ENCODE measurements at regions of chr19 and their contacts with region 1.

Region 1: GRCh38 chr19:49391581-49392399 is 3.7 kb downstream of the KASH5 start:
- DNase-seq: peak; percentile 49 to 90 (median 82)
- ATAC-seq: peak; percentile 78
- H3K4me3 ChIP-seq: no peak overlapping the region
- H3K27ac ChIP-seq: no peak overlapping the region
- H3K4me1 ChIP-seq: no peaks in the 10 kb centered on the region
- H3K27me3 ChIP-seq: peaks cover 0 to 21% of the 10 kb centered on the region in 2 donors
- CTCF ChIP-seq: peak; percentile 60 to 72

Region 2: DNA sequence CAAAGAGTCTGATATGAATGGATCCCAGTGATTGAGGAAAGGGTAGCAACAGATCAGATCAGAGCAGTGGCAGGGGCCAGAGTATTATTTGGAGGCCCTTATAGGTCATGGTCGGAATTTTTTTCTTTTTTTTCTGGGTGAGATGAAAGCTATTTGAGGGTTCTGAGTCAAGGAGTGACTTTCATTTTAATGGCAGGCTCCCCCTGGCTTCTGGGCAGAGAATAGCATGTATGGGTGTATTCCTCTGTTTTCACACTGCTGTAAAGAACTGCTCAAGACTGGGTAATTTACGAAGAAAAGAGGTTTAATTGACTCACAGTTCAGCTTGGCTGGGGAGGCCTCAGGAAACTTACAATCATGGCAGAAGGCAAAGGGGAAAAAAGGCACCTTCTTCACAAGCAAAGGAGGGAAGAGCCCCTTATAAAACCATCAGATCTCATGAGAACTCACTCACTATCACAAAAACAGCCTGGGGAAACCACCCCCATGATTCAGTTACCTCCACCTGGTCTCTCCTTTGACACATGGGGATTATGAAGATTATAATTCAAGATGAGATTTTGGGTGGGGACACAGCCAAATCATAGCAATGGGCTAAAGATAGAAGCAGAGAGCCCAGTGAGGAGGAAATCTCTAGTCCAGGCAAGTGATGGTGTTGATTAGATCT is 63.8 kb before region 1 on chr19:
- intact Hi-C with region 1: no loop called
- DNase-seq: no peak
- ATAC-seq: peak; percentile 70
- H3K4me3 ChIP-seq: no peak overlapping the region
- H3K27ac ChIP-seq: no peak overlapping the region
- H3K4me1 ChIP-seq: peaks cover 0 to 13% of the 10 kb centered on the region in 2 donors
- H3K27me3 ChIP-seq: no peaks in the 10 kb centered on the region
- CTCF ChIP-seq: peak; percentile 45 to 71

Region 3: DNA sequence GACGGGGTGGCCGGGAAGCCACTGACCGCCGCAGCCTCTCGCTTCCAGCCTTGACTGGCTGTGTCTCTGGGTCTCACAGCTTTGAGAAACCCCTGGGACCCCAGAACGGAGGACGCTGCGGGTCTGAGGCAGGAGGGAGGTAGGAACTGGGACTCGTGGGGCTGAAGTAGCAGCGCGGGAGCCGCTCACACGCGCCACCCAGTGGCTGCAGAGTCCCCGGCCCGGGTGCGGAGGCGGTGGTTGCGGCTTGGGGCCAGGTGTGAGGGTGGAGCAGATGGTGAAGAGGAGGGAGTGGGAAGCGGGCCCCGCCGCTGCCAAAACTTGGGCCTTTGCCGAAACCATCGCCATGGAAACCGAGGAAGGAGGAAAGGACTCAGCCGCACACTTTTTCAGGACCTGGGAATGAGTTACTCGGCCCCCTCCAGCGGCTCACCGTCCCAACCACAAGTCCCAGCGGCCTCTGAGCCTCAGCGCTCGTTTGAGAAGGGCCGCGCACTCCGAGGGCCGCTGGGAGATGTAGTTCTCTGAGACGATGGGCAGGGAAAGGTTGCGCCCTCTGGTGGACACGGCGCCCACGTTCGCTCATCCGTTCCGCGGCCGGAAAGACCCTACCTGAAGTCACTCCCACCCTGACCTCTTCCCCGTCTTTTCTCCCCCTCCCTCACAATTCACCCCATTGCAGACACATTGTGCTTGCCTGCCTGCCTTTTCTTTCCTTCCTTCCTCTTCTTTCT is 51.7 kb after region 1 on chr19:
- intact Hi-C with region 1: loop called in 1 of 2 experiments (anchors 5 kb)
- DNase-seq: peak; percentile 94 to 98 (median 96)
- ATAC-seq: peak; percentile 93
- H3K4me3 ChIP-seq: peak overlapping the region; percentile 62 to 84
- H3K27ac ChIP-seq: peak overlapping the region; percentile 73 to 77
- H3K4me1 ChIP-seq: peaks cover 0 to 31% of the 10 kb centered on the region in 2 donors
- H3K27me3 ChIP-seq: peaks cover 28 to 43% of the 10 kb centered on the region in 2 donors
- CTCF ChIP-seq: peak; percentile 67 to 90

Region 4: DNA sequence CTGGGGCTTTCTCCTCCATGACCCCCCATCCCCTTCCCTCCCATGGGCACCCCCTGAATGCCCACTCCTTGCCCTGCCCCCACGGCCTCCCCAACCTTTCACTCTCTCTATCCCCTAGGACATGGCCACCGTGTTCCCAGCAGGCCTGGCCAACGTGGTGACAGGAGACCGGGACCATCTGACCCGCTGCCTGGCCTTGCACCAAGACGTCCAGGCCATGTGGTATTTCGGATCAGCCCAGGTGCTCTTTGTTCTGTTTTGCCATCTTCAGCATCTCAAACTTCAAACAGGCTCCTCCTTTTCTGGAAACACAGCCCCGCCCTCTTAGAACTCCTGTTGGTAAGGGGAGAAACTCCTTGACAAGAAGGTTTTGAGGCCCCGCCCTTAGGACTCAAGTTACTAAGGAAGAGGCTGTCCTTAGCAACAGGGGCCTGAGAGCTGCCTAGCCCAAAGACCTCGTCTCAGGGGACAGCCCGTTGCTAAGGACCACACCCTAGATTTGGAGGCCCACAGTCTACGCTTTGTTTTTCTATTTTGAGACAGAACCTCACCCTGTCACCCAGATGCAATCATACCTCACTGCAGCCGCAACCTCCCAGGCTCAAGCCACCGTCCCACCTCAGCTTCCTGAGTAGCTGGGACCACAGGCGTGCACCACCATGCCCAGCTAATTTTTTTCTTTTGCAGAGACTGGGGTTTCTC is 77.1 kb after region 1 on chr19:
- intact Hi-C with region 1: no loop called
- DNase-seq: peak in 1 of 4 donors; percentile 57
- ATAC-seq: peak; percentile 47
- H3K4me3 ChIP-seq: no peak overlapping the region
- H3K27ac ChIP-seq: peak overlapping the region in 1 of 2 donors; percentile 61
- H3K4me1 ChIP-seq: peaks cover 0 to 29% of the 10 kb centered on the region in 2 donors
- H3K27me3 ChIP-seq: no peaks in the 10 kb centered on the region
- CTCF ChIP-seq: no peak

Measured in left lung (tissue), 14 donors.